ENCODE measurements at regions of chr2 and their contacts with region 1.

Region 1: GRCh38 chr2:69046221-69046662 is 33.3 kb downstream of the ANTXR1 start:
- DNase-seq: peak; percentile 88
- H3K4me3 ChIP-seq: no peak overlapping the region
- H3K27ac ChIP-seq: peak overlapping the region; percentile 77
- H3K4me1 ChIP-seq: peaks cover 20% of the 10 kb centered on the region
- H3K27me3 ChIP-seq: no peaks in the 10 kb centered on the region
- CTCF ChIP-seq: no peak
- POLR2A ChIP-seq: no peak

Region 2: GRCh38 chr2:68807821-68808266 is 238.4 kb before region 1 on chr2:
- CTCF ChIA-PET with region 1: no interaction called
- POLR2A ChIA-PET with region 1: no interaction called
- dilution Hi-C with region 1: no loop called
- intact Hi-C with region 1: no loop called
- DNase-seq: peak; percentile 43
- H3K4me3 ChIP-seq: no peak overlapping the region
- H3K27ac ChIP-seq: no peak overlapping the region
- H3K4me1 ChIP-seq: peaks cover 23% of the 10 kb centered on the region
- H3K27me3 ChIP-seq: peaks cover 3 to 21% of the 10 kb centered on the region in 2 experiments
- CTCF ChIP-seq: no peak
- POLR2A ChIP-seq: no peak

Region 3: GRCh38 chr2:69061525-69061924 is 15.3 kb after region 1 on chr2:
- CTCF ChIA-PET with region 1: interaction called, 13 read pairs
- POLR2A ChIA-PET with region 1: no interaction called
- dilution Hi-C with region 1: no loop called
- intact Hi-C with region 1: no loop called
- DNase-seq: peak; percentile 21
- H3K4me3 ChIP-seq: no peak overlapping the region
- H3K27ac ChIP-seq: no peak overlapping the region
- H3K4me1 ChIP-seq: peaks cover 18% of the 10 kb centered on the region
- H3K27me3 ChIP-seq: no peaks in the 10 kb centered on the region
- CTCF ChIP-seq: no peak
- POLR2A ChIP-seq: no peak

Region 4: DNA sequence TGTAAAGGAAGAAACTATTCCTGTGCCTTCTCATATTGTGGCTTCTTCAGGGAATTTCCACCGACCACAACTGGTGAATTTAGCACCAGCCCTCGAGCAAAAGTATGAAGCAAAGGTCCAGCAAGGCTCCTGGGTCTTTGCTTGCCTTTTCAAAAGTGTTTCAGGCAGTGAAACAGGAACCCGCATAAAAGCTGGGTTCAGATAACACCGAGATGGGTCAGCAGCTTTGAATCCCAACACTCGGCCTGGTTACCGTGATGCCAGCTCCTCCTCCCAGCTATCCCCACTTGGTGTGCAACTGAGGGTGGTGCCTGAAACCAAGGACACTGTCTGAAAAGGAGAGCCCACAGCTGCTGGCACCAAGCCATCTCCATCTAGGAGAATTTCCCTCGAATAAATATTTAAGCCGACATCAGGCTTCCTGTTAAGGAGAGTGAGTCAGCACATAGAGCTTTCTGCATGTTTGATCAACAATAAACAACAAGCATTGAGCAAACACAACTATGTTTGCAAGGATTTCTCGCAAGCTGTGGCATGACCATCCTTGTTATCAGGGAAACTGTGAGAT is 36.3 kb after region 1 on chr2:
- CTCF ChIA-PET with region 1: interaction called, 3 read pairs
- POLR2A ChIA-PET with region 1: no interaction called
- dilution Hi-C with region 1: no loop called
- intact Hi-C with region 1: loop called (anchors 2 kb)
- DNase-seq: peak; percentile 87
- H3K4me3 ChIP-seq: no peak overlapping the region
- H3K27ac ChIP-seq: peak overlapping the region; percentile 47
- H3K4me1 ChIP-seq: peaks cover 20% of the 10 kb centered on the region
- H3K27me3 ChIP-seq: no peaks in the 10 kb centered on the region
- CTCF ChIP-seq: no peak
- POLR2A ChIP-seq: no peak

Region 5: GRCh38 chr2:69122271-69122670 is 76.0 kb after region 1 on chr2:
- CTCF ChIA-PET with region 1: no interaction called
- POLR2A ChIA-PET with region 1: no interaction called
- dilution Hi-C with region 1: no loop called
- intact Hi-C with region 1: loop called (anchors 2 kb)
- DNase-seq: peak; percentile 84
- H3K4me3 ChIP-seq: no peak overlapping the region
- H3K27ac ChIP-seq: peak overlapping the region; percentile 55
- H3K4me1 ChIP-seq: peaks cover 26% of the 10 kb centered on the region
- H3K27me3 ChIP-seq: no peaks in the 10 kb centered on the region
- CTCF ChIP-seq: no peak
- POLR2A ChIP-seq: no peak

Region 6: GRCh38 chr2:69163109-69163508 is 116.9 kb after region 1 on chr2:
- CTCF ChIA-PET with region 1: no interaction called
- POLR2A ChIA-PET with region 1: no interaction called
- dilution Hi-C with region 1: no loop called
- intact Hi-C with region 1: loop called (anchors 1 kb)
- DNase-seq: peak; percentile 68
- H3K4me3 ChIP-seq: no peak overlapping the region
- H3K27ac ChIP-seq: peak overlapping the region; percentile 95
- H3K4me1 ChIP-seq: peaks cover 40% of the 10 kb centered on the region
- H3K27me3 ChIP-seq: no peaks in the 10 kb centered on the region
- CTCF ChIP-seq: no peak
- POLR2A ChIP-seq: no peak

Region 7: DNA sequence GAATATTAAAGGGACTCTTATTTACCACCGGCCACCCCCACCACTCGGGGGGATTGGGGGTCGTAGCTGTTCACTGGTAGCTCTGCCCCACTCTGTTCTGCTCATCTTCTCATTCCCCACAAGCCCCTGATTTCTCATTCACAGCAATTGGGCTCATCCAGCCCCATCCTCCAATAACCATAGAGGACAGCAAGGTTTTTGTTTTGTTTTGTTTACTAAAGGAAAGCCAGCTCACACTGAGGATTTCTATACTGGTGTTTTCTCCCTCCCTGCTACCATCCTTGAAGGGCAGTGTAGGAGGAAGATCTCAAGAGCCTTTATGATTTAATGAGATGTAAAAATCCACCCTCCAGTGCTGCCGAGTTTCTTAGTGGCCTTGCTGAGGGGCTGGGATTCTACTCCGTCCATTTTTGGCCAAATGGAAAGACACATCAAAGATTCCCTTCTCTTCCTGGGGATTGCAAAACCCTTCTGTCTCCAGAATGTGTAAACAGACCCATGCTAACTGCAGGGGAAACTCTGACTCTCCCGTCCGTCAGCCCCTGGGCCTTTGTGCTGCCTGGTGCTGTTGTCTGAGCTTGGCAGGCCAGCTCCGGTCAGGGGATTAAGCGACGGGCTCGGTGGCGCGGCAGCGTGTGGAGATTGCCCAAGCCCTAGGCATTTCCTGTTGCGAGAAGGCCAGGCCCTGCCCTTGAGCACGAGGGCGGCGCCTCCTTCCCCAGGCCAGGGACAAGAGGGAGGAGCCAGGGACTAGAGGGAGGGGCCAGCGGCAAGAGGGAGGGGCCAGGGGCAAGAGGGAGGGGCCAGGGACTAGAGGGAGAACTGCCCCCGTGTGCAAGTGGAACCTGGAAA is 131.8 kb after region 1 on chr2:
- CTCF ChIA-PET with region 1: no interaction called
- POLR2A ChIA-PET with region 1: no interaction called
- dilution Hi-C with region 1: no loop called
- intact Hi-C with region 1: loop called (anchors 1 kb)
- DNase-seq: peak; percentile 74
- H3K4me3 ChIP-seq: peak overlapping the region in 1 of 3 experiments; percentile 0
- H3K27ac ChIP-seq: peak overlapping the region; percentile 91
- H3K4me1 ChIP-seq: peaks cover 14% of the 10 kb centered on the region
- H3K27me3 ChIP-seq: no peaks in the 10 kb centered on the region
- CTCF ChIP-seq: no peak
- POLR2A ChIP-seq: no peak